PC-9 (cell line): ENCODE measurements at regions of chr12 and their contacts with region 1.

Region 1: GRCh38 chr12:49720214-49720613 is 13.0 kb upstream of the FMNL3 start:
- DNase-seq: no peak
- H3K4me3 ChIP-seq: no peak overlapping the region
- H3K27ac ChIP-seq: no peak overlapping the region
- H3K4me1 ChIP-seq: no peaks in the 10 kb centered on the region
- H3K27me3 ChIP-seq: peaks cover 22% of the 10 kb centered on the region; the same call in 1 of the 2 replicates
- CTCF ChIP-seq: no peak; the same call in 1 of the 2 replicates

Region 2: GRCh38 chr12:49012739-49013138 is 707.5 kb before region 1 on chr12:
- CTCF ChIA-PET with region 1: interaction called, 14 read pairs
- POLR2A ChIA-PET with region 1: no interaction called
- intact Hi-C with region 1: no loop called
- DNase-seq: no peak
- H3K4me3 ChIP-seq: no peak overlapping the region
- H3K27ac ChIP-seq: no peak overlapping the region
- H3K4me1 ChIP-seq: peaks cover 21% of the 10 kb centered on the region
- H3K27me3 ChIP-seq: no peaks in the 10 kb centered on the region
- CTCF ChIP-seq: no peak

Region 3: DNA sequence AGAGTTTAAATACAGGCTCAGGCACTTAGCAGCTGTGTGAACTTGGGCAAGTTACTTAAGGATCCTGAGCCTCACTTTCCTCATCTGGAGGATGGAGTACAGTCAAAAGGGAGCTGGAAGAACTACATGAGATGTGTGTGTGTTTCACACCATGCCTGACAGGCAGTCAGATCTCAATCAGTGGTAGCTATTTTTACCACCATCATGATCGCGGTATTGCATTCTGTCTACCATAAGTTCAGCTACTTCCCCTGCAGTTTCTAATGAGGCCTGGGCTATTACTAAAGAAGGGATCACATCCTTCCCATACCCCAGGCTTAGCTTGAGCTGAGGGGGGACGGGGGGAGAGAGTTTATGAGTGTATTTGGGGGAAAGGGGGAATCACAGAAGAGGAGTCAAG is 259.6 kb after region 1 on chr12:
- CTCF ChIA-PET with region 1: no interaction called
- POLR2A ChIA-PET with region 1: interaction called, 29 read pairs
- intact Hi-C with region 1: no loop called
- DNase-seq: no peak
- H3K4me3 ChIP-seq: no peak overlapping the region
- H3K27ac ChIP-seq: no peak overlapping the region
- H3K4me1 ChIP-seq: no peaks in the 10 kb centered on the region
- H3K27me3 ChIP-seq: no peaks in the 10 kb centered on the region
- CTCF ChIP-seq: no peak